Caco-2 (cell line): ENCODE measurements at regions of chr1 and their contacts with region 1.

Region 1: DNA sequence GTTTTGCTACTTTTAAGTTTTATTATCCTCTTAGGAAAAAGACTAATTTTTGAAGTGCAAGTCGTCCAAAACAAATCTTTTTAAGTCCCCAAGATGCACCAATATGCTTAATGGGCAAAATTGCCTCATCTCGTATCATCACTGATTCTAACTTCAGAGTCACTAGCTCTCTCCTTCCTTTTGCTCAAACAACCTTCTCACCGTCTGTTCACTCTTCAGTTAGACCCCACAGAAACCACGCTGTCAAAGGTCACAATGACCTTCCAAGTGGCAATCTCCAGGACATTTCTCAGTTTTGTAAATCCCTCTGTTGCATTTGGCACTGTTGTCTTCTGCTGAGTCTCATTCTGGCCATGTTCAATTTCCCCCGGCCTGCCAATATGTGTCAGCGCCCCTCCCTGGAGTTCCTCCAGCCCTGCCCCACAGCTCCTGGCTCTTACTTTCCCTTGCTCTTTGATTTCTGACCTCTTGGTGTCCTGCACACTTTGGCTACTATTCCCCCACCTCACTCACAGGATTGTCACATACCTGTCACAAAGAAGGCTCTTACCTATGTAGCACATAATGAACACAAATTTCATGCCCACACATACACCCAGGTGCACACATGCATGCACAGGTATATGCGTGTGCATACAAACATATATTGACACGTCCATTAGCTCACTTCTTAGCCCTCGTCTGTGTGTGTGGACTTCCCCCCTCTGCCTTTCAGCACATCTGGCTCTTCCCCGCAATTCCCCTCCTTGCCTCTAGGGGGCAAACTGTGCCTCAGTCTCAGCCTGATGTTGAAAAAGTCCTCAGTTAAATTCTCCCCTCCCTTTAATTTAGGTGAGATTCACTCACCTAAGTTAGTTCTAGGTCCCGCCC is 354.0 kb upstream of the DUSP10 start:
- DNase-seq: peak; percentile 39 to 52
- H3K4me3 ChIP-seq: no peak overlapping the region
- H3K4me3 Mint-ChIP-seq: no peak overlapping the region
- H3K27ac Mint-ChIP-seq: no peak overlapping the region
- H3K4me1 ChIP-seq: no peaks in the 10 kb centered on the region
- H3K4me1 Mint-ChIP-seq: no peaks in the 10 kb centered on the region
- H3K27me3 ChIP-seq: no peaks in the 10 kb centered on the region
- H3K27me3 Mint-ChIP-seq: no peaks in the 10 kb centered on the region
- CTCF ChIP-seq: peak; percentile 82 to 89

Region 2: GRCh38 chr1:222171005-222171404 is 75.2 kb after region 1 on chr1:
- CTCF ChIA-PET with region 1: no interaction called
- POLR2A ChIA-PET with region 1: no interaction called
- intact Hi-C with region 1: loop called (anchors 1 kb)
- DNase-seq: peak in 1 of 2 experiments; percentile 4
- H3K4me3 ChIP-seq: no peak overlapping the region
- H3K4me3 Mint-ChIP-seq: no peak overlapping the region
- H3K27ac Mint-ChIP-seq: no peak overlapping the region
- H3K4me1 ChIP-seq: no peaks in the 10 kb centered on the region
- H3K4me1 Mint-ChIP-seq: no peaks in the 10 kb centered on the region
- H3K27me3 ChIP-seq: no peaks in the 10 kb centered on the region
- H3K27me3 Mint-ChIP-seq: peaks cover 2% of the 10 kb centered on the region
- CTCF ChIP-seq: peak; percentile 34 to 52

Region 3: DNA sequence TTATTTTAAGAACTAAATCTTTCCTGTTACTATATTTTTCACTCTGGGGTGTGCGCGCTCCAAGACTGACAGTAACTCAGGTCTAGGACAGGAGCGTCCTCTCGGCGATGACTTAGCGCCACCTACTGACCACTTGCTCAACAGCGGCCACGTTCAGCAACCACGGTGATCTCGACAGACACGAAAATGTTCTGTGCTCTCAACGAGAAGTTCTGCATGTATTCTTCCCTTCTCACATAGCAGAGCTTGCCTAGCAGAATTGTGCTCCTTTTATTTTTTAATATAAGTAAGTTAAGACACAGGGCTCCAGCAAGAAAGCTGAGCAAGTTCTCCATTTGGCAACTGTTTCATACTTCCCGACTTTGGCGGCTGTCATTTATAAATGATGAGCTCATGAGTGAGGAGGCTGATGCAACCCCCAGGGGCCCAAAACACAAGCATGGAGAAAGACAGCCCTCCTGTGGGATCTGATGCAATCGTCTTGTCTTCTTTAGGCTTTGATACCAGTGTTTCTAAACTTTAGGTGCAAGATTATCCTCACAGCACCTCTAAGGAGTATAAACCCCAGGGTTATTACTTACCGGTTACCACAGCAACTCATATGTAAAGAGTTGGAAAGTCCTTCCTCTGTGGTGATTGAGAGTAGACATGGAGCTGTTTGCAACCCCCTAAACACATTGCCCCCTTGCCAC is 359.5 kb after region 1 on chr1:
- CTCF ChIA-PET with region 1: interaction called, 3 read pairs
- POLR2A ChIA-PET with region 1: no interaction called
- intact Hi-C with region 1: loop called (anchors 1 kb)
- DNase-seq: peak; percentile 75 to 81
- H3K4me3 ChIP-seq: no peak overlapping the region
- H3K4me3 Mint-ChIP-seq: peak overlapping the region; percentile 4
- H3K27ac Mint-ChIP-seq: no peak overlapping the region
- H3K4me1 ChIP-seq: no peaks in the 10 kb centered on the region
- H3K4me1 Mint-ChIP-seq: no peaks in the 10 kb centered on the region
- H3K27me3 ChIP-seq: no peaks in the 10 kb centered on the region
- H3K27me3 Mint-ChIP-seq: peaks cover 6% of the 10 kb centered on the region
- CTCF ChIP-seq: peak; percentile 81 to 90